Caco-2 (cell line): ENCODE measurements at regions of chr17 and their contacts with region 1.

Region 1: DNA sequence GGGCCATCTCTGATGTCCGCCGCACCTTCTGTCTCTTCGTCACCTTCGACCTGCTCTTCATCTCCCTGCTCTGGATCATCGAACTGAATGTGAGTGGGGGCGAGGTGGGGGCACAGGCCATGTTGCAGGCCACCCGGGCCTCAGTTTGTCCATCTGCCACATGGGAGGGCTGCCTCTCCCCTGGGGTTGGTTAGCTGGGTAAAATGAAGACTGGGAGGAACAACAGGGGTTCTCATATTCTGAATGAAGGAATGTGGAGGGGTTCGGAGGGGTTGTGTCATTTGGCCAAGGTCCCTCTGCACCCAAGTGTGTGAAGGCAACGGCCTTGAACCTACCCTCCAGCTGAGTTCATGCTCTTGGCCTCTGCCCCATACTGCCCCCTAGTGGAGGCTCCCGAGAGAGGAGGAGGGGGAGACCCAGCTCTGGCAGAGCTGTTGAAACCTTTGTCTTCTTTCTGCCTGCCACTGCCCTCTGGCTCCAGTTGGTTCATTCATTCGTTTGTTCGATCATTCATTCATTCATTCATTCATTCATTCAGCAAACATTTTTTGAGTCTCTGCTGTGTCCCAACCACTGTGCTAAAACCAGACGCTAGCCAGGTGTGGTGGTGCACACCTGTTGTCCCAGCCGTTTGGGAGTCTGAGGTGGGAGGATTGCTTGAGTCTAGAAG is 11.4 kb upstream of the TCAP start:
- DNase-seq: peak in 1 of 2 experiments; percentile 69
- H3K4me3 ChIP-seq: no peak overlapping the region
- H3K4me3 Mint-ChIP-seq: no peak overlapping the region
- H3K27ac Mint-ChIP-seq: no peak overlapping the region
- H3K4me1 ChIP-seq: peaks cover 19% of the 10 kb centered on the region
- H3K4me1 Mint-ChIP-seq: peaks cover 18% of the 10 kb centered on the region
- H3K27me3 ChIP-seq: no peaks in the 10 kb centered on the region
- H3K27me3 Mint-ChIP-seq: no peaks in the 10 kb centered on the region
- CTCF ChIP-seq: peak; percentile 76 to 81

Region 2: DNA sequence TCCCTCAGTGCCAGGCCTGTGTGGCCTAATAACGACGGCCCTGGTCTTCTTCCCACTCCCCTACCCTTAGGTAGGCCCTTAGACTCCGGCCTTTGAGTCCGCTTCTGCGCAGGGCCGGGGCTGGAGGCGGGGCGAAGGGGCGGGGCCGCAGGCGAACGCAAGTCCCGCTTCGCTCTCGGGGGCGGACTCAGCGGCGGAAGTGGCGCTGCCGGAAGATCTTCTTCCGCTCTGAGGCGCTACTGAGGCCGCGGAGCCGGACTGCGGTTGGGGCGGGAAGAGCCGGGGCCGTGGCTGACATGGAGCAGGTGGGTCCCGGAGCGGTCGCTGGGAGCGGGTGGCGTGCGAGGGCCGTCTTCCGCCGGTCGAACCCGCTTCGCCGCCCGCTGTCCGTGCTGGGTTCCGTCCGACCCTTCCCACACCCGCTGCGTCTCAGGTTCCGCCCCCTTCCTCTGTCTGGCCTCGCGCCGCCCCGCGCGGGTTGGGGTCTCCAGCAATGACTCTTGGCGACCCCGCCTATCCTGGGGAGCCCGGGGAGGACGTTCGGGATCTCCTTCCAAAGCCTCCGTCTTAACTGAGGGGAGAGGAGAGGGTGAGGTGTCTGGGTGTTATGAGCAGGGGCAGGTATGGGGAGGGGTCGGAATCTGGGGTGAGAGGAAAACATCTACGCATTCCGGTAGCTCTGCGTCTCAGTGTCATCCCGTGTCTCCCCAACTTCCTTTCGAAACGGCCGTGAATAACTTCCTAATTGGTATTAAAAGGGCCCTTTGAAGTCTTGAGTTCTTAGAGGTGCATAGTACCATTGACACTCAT is 16.7 kb before region 1 on chr17 and contains the start of gene STARD3:
- CTCF ChIA-PET with region 1: interaction called, 13 read pairs
- POLR2A ChIA-PET with region 1: no interaction called
- intact Hi-C with region 1: no loop called
- DNase-seq: peak; percentile 90 to 92
- H3K4me3 ChIP-seq: peak within 1 kb of the TSS; percentile 79
- H3K4me3 Mint-ChIP-seq: peak within 1 kb of the TSS; percentile 90
- H3K27ac Mint-ChIP-seq: peak within 1 kb of the TSS; percentile 58
- H3K4me1 ChIP-seq: peaks cover 5% of the 10 kb centered on the region
- H3K4me1 Mint-ChIP-seq: peaks cover 11% of the 10 kb centered on the region
- H3K27me3 ChIP-seq: no peaks in the 10 kb centered on the region
- H3K27me3 Mint-ChIP-seq: no peaks in the 10 kb centered on the region
- CTCF ChIP-seq: peak in 1 of 2 experiments; percentile 25
- total RNA-seq, gene STARD3: 42.6 and 55.5 TPM in 2 replicates

Region 3: DNA sequence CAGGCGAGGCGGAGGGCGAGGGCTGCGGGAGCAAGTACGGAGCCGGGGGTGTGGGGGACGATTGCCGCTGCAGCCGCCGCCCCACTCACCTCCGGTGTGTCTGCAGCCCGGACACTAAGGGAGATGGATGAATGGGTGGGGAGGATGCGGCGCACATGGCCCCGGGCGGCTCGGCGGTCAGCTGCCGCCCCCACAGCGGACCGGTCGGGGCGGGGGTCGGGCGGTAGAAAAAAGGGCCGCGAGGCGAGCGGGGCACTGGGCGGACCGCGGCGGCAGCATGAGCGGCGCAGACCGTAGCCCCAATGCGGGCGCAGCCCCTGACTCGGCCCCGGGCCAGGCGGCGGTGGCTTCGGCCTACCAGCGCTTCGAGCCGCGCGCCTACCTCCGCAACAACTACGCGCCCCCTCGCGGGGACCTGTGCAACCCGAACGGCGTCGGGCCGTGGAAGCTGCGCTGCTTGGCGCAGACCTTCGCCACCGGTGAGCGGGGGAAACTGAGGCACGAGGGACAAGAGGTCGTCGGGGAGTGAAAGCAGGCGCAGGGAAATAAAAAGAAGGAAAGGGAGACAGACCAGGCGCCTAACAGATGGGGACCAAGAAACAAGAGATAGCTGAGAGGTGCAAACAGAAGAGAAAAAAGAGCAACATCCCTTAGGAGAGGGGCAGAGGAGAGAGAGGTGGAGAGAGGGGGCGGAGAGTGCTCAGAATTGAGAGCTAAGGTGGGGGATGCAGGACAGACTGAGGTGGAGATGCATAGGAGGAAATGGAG is 14.6 kb after region 1 on chr17 and contains the start of gene PNMT:
- CTCF ChIA-PET with region 1: interaction called, 12 read pairs
- POLR2A ChIA-PET with region 1: no interaction called
- intact Hi-C with region 1: no loop called
- DNase-seq: peak; percentile 73 to 85
- H3K4me3 ChIP-seq: peak within 1 kb of the TSS; percentile 32
- H3K4me3 Mint-ChIP-seq: peak within 1 kb of the TSS; percentile 3
- H3K27ac Mint-ChIP-seq: no peak within 1 kb of the TSS
- H3K4me1 ChIP-seq: peaks cover 7% of the 10 kb centered on the region; the same call in 1 of the 2 replicates
- H3K4me1 Mint-ChIP-seq: peaks cover 6% of the 10 kb centered on the region
- H3K27me3 ChIP-seq: no peaks in the 10 kb centered on the region
- H3K27me3 Mint-ChIP-seq: peaks cover 4% of the 10 kb centered on the region
- CTCF ChIP-seq: peak; percentile 68 to 79
- total RNA-seq, gene PNMT: not detected in 2 replicates